ENCODE measurements at regions of chrX and their contacts with region 1.

Region 1: DNA sequence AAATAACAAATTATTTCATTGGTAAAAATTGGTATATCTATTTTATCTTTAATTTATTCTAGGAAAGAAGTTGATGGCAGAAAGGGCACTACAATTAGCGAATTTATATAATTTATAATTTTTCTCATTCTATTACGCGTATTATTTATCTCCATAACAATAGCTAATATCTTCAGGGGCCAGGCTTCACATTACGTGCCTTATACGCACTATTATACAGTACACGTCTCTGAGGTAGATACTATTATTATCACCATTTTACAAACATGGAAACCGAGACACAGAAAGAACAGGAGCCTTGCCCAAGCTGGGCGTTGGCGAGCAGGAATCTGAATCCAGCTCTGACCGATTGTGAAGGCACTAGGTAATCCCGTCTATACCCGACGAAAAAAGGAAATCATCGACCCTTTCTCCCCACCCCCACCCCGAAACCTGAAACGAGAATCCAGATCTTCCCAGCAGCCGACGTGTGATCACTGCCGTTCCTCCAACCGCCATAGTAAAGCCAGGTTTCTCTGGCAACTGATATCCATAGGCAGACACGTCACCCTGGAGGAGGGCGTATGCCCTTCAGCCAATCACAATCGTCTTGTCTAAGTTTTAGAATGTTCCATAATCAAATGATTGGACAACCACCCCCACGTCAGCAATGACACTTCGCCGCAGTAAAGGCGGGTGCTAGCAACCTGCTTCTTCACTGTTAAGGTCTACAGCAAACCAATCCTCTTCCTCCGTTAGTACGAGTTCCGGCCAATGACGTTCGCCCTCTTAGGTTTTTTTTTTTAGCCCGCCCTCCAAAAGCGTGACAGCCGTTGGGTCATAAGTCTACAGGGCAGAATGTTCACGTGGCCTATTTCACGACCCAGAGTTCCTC is at the start of gene MORF4L2:
- DNase-seq: peak; percentile 55
- ATAC-seq: peak; percentile 83
- H3K4me3 Mint-ChIP-seq: peak within 1 kb of the TSS; percentile 80
- H3K27ac Mint-ChIP-seq: peak within 1 kb of the TSS; percentile 63
- H3K4me1 Mint-ChIP-seq: peaks cover 4% of the 10 kb centered on the region
- H3K27me3 Mint-ChIP-seq: no peaks in the 10 kb centered on the region
- CTCF ChIP-seq: no peak
- total RNA-seq, gene MORF4L2: 89.2 and 111 TPM in 2 replicates

Region 2: DNA sequence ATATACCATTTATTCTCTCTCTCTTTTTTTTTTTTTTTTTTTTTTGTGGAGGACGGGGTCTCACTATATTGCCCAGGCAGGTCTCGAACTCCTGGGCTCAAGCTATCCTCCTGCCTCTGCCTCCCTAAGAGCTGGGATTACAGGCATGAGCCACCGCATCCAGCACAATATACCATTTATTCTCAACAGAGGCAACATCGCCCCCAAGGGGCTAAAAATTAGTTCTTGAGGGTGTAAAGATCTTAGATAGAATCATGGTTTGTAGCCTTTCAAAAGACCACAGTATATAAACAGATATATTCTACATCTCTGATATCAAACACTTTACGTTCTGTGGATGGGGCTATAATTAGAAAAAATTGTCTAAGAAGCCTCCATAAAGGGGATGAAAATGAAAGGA is 1600.7 kb before region 1 on chrX:
- CTCF ChIA-PET with region 1: no interaction called
- POLR2A ChIA-PET with region 1: no interaction called
- intact Hi-C with region 1: no loop called
- DNase-seq: no peak
- ATAC-seq: no peak
- H3K4me3 Mint-ChIP-seq: no peak overlapping the region
- H3K27ac Mint-ChIP-seq: no peak overlapping the region
- H3K4me1 Mint-ChIP-seq: no peaks in the 10 kb centered on the region
- H3K27me3 Mint-ChIP-seq: no peaks in the 10 kb centered on the region
- CTCF ChIP-seq: no peak

Region 3: GRCh38 chrX:103310542-103311398 is 375.7 kb before region 1 on chrX and contains the start of gene BEX2:
- CTCF ChIA-PET with region 1: no interaction called
- POLR2A ChIA-PET with region 1: no interaction called
- intact Hi-C with region 1: loop called (anchors 10 kb)
- DNase-seq: peak; percentile 66
- ATAC-seq: peak; percentile 98
- H3K4me3 Mint-ChIP-seq: peak within 1 kb of the TSS; percentile 82
- H3K27ac Mint-ChIP-seq: peak within 1 kb of the TSS; percentile 35
- H3K4me1 Mint-ChIP-seq: no peaks in the 10 kb centered on the region
- H3K27me3 Mint-ChIP-seq: no peaks in the 10 kb centered on the region
- CTCF ChIP-seq: no peak
- total RNA-seq, gene BEX2: 12.3 and 13.1 TPM in 2 replicates

Region 4: GRCh38 chrX:103554687-103555424 is 131.6 kb before region 1 on chrX:
- CTCF ChIA-PET with region 1: no interaction called
- POLR2A ChIA-PET with region 1: no interaction called
- intact Hi-C with region 1: loop called (anchors 1 kb)
- DNase-seq: peak; percentile 32
- ATAC-seq: peak; percentile 85
- H3K4me3 Mint-ChIP-seq: peak overlapping the region; percentile 91
- H3K27ac Mint-ChIP-seq: peak overlapping the region; percentile 83
- H3K4me1 Mint-ChIP-seq: peaks cover 11% of the 10 kb centered on the region
- H3K27me3 Mint-ChIP-seq: no peaks in the 10 kb centered on the region
- CTCF ChIP-seq: no peak

Region 5: GRCh38 chrX:103629318-103630170 is 56.9 kb before region 1 on chrX:
- CTCF ChIA-PET with region 1: no interaction called
- POLR2A ChIA-PET with region 1: interaction called, 4 read pairs
- intact Hi-C with region 1: loop called (anchors 1 kb)
- DNase-seq: peak; percentile 16
- ATAC-seq: peak; percentile 55
- H3K4me3 Mint-ChIP-seq: peak overlapping the region; percentile 90
- H3K27ac Mint-ChIP-seq: peak overlapping the region; percentile 87
- H3K4me1 Mint-ChIP-seq: peaks cover 16% of the 10 kb centered on the region
- H3K27me3 Mint-ChIP-seq: no peaks in the 10 kb centered on the region
- CTCF ChIP-seq: no peak

Region 6: DNA sequence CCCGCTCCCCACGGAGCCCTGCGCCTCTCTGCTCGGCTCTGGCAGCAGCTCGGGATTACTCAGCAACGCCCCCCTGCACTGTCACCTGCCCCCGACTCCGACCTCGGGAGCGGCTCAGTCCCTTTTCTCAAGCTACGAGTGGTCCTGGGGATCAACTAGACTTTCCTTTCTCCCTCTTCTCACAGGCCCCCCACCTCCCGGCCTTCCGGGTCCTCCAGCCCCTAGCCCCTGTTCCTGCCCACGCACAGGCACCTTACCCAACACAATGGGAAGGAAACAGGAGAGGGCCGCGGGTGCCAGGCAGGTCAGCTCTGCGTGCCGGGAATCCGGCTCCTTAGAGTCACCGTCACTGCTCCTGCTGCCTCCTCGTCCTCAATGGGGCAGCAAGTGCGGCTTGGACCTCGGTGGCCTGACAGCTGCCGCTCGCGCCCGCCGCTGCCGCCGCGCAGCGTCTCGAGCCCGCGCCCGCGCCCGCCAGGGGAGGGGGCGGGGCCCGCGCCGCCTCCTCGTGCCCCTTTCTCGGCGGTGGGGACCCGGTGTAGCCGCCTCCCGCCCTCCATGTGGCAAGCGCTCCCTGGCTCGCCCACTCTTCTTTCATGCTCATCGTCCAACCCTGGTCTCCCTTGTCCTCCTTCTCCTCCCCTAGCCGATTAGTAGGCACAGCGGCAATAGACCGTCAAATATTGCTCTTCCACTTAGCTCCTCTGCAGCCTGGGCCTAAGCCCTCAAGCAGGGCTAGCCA is 145.5 kb after region 1 on chrX and contains the start of gene RAB9B:
- CTCF ChIA-PET with region 1: no interaction called
- POLR2A ChIA-PET with region 1: interaction called, 10 read pairs
- intact Hi-C with region 1: no loop called
- DNase-seq: peak; percentile 47
- ATAC-seq: peak; percentile 95
- H3K4me3 Mint-ChIP-seq: peak within 1 kb of the TSS; percentile 85
- H3K27ac Mint-ChIP-seq: no peak within 1 kb of the TSS
- H3K4me1 Mint-ChIP-seq: peaks cover 2% of the 10 kb centered on the region
- H3K27me3 Mint-ChIP-seq: peaks cover 6% of the 10 kb centered on the region
- CTCF ChIP-seq: no peak
- total RNA-seq, gene RAB9B: 0.39 and 0.51 TPM in 2 replicates

Region 7: DNA sequence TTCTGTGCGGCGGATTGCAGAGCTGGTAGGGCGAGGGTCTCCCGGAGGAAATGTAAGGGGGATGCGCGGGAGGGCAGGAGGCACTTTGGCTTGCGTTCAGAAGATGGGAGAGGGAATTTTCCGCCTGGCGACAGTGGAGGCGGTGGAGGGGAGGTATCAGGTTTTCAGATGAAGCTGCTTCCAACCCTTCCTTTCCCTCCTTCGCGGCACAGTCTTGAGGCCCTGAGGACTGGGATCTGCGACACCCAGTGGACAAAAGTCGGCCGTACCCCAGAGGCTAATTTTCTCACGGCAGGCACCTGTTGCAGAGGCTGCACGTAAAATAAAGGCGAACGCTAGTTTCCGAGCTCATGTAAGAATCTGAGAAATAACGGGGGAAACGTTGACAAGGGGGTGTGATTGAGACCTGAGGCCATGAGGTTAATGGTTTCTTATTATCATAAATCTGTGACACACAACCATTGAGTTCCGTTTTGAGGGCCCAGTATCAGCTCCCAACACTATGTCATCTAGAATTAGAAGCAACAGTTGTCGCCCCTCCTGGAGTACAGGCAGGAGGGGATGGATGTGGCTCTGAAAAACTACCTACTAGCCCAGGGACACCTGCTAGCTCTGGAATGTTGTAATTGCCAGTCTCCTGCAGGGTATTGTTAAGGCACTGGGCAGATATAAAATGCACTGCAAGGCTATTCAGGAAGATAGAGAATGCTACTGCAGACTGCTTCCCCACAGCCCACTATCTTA is 427.0 kb after region 1 on chrX:
- CTCF ChIA-PET with region 1: no interaction called
- POLR2A ChIA-PET with region 1: no interaction called
- intact Hi-C with region 1: loop called (anchors 2 kb)
- DNase-seq: peak; percentile 18
- ATAC-seq: peak; percentile 67
- H3K4me3 Mint-ChIP-seq: peak overlapping the region; percentile 90
- H3K27ac Mint-ChIP-seq: peak overlapping the region; percentile 77
- H3K4me1 Mint-ChIP-seq: peaks cover 45% of the 10 kb centered on the region
- H3K27me3 Mint-ChIP-seq: no peaks in the 10 kb centered on the region
- CTCF ChIP-seq: no peak

Measured in activated B cell treated with CpG ODN at 0.5 μM for 24 hours (primary cell).